ENCODE measurements at regions of chr1 and their contacts with region 1.

Region 1: GRCh38 chr1:198088360-198089071 is 68.3 kb upstream of the NEK7 start:
- DNase-seq: peak; percentile 38
- ATAC-seq: no peak
- H3K4me3 ChIP-seq: no peak overlapping the region
- H3K4me3 Mint-ChIP-seq: no peak overlapping the region
- H3K27ac ChIP-seq: no peak overlapping the region
- H3K27ac Mint-ChIP-seq: no peak overlapping the region
- H3K4me1 ChIP-seq: no peaks in the 10 kb centered on the region
- H3K4me1 Mint-ChIP-seq: no peaks in the 10 kb centered on the region
- H3K27me3 ChIP-seq: no peaks in the 10 kb centered on the region
- H3K27me3 Mint-ChIP-seq: peaks cover 13% of the 10 kb centered on the region
- CTCF ChIP-seq: peak; percentile 79

Region 2: DNA sequence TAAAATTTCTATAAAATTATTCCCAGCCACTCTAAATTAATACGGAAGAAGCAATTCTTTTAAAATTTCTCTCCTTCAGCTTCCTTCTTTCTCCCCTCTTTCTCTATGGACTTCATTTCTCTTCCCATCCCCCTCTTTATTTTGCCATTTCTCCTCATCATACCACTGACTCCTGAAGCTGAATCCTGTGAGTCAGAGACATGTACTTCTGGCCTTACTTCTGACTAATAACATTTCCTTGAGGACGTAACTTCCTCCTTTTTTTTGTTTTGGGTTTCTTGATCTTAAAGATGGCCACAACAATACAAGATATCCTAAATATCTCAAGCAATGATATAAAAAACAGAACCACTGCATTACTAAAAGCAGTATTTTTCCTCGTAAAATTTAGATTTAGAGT is 249.7 kb before region 1 on chr1:
- CTCF ChIA-PET with region 1: no interaction called
- POLR2A ChIA-PET with region 1: no interaction called
- intact Hi-C with region 1: no loop called
- DNase-seq: no peak
- ATAC-seq: no peak
- H3K4me3 ChIP-seq: no peak overlapping the region
- H3K4me3 Mint-ChIP-seq: no peak overlapping the region
- H3K27ac ChIP-seq: no peak overlapping the region
- H3K27ac Mint-ChIP-seq: no peak overlapping the region
- H3K4me1 ChIP-seq: no peaks in the 10 kb centered on the region
- H3K4me1 Mint-ChIP-seq: peaks cover 3% of the 10 kb centered on the region
- H3K27me3 ChIP-seq: no peaks in the 10 kb centered on the region
- H3K27me3 Mint-ChIP-seq: no peaks in the 10 kb centered on the region
- CTCF ChIP-seq: no peak

Region 3: DNA sequence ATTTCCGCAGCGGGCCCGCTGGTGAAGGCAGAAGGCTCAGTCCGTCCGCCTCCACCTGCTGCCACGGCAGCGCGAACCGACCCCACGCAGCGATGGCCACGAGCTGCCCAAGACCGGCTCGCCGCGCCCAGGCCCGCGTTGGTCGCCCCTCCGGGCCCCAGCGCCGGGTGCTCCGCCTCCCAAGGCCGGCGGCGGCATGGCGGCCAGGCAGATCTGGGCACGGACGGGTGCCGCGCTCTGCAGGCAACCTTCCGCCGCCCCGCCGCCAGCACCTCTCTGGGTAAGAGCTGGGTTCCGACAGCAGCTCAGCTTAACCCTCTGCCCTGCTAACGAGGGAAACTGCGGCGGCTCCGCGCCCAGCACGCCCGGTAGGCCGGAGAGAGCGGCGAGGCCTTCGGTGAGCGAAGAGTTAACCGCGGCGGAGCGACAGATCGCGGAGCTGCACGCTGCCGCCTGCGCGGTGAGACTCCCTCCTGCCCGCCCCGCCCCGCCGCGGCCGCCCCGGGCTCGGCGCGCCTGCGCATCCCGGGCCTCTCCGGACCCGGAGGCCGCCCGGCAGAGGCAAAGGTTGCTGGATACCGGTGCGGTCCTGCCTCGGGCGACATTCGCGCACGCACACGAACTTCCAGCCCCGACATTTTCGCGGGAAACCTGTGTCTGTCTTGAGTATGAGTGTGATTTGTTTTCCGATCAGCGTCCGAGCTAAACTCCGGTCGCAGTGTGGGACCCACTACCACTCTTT is 185.9 kb before region 1 on chr1 and contains the start of gene C1orf53:
- CTCF ChIA-PET with region 1: no interaction called
- POLR2A ChIA-PET with region 1: no interaction called
- intact Hi-C with region 1: no loop called
- DNase-seq: peak; percentile 88
- ATAC-seq: peak; percentile 93
- H3K4me3 ChIP-seq: peak within 1 kb of the TSS; percentile 59 to 84 (median 77)
- H3K4me3 Mint-ChIP-seq: peak within 1 kb of the TSS; percentile 98
- H3K27ac ChIP-seq: peak within 1 kb of the TSS; percentile 39 to 61
- H3K27ac Mint-ChIP-seq: peak within 1 kb of the TSS; percentile 90
- H3K4me1 ChIP-seq: peaks cover 13 to 17% of the 10 kb centered on the region in 2 donors
- H3K4me1 Mint-ChIP-seq: peaks cover 17% of the 10 kb centered on the region
- H3K27me3 ChIP-seq: peaks cover 1 to 43% (median 34%) of the 10 kb centered on the region in 4 experiments
- H3K27me3 Mint-ChIP-seq: peaks cover 52% of the 10 kb centered on the region
- CTCF ChIP-seq: no peak
- total RNA-seq, gene C1orf53: not detected in 2 replicates

Region 4: GRCh38 chr1:198275597-198275996 is 187.1 kb after region 1 on chr1:
- CTCF ChIA-PET with region 1: interaction called, 9 read pairs
- POLR2A ChIA-PET with region 1: no interaction called
- intact Hi-C with region 1: loop called (anchors 2 kb)
- DNase-seq: no peak
- ATAC-seq: no peak
- H3K4me3 ChIP-seq: no peak overlapping the region
- H3K4me3 Mint-ChIP-seq: no peak overlapping the region
- H3K27ac ChIP-seq: no peak overlapping the region
- H3K27ac Mint-ChIP-seq: no peak overlapping the region
- H3K4me1 ChIP-seq: no peaks in the 10 kb centered on the region
- H3K4me1 Mint-ChIP-seq: no peaks in the 10 kb centered on the region
- H3K27me3 ChIP-seq: no peaks in the 10 kb centered on the region
- H3K27me3 Mint-ChIP-seq: no peaks in the 10 kb centered on the region
- CTCF ChIP-seq: no peak

Region 5: GRCh38 chr1:198359024-198359653 is 270.6 kb after region 1 on chr1:
- CTCF ChIA-PET with region 1: interaction called, 12 read pairs
- POLR2A ChIA-PET with region 1: no interaction called
- intact Hi-C with region 1: loop called (anchors 2 kb)
- DNase-seq: peak; percentile 17
- ATAC-seq: no peak
- H3K4me3 ChIP-seq: no peak overlapping the region
- H3K4me3 Mint-ChIP-seq: no peak overlapping the region
- H3K27ac ChIP-seq: no peak overlapping the region
- H3K27ac Mint-ChIP-seq: no peak overlapping the region
- H3K4me1 ChIP-seq: no peaks in the 10 kb centered on the region
- H3K4me1 Mint-ChIP-seq: no peaks in the 10 kb centered on the region
- H3K27me3 ChIP-seq: no peaks in the 10 kb centered on the region
- H3K27me3 Mint-ChIP-seq: peaks cover 6% of the 10 kb centered on the region
- CTCF ChIP-seq: peak; percentile 41

Measured in B cell (primary cell).